MCF 10A (cell line): ENCODE measurements at regions of chr12 and their contacts with region 1.

Region 1: DNA sequence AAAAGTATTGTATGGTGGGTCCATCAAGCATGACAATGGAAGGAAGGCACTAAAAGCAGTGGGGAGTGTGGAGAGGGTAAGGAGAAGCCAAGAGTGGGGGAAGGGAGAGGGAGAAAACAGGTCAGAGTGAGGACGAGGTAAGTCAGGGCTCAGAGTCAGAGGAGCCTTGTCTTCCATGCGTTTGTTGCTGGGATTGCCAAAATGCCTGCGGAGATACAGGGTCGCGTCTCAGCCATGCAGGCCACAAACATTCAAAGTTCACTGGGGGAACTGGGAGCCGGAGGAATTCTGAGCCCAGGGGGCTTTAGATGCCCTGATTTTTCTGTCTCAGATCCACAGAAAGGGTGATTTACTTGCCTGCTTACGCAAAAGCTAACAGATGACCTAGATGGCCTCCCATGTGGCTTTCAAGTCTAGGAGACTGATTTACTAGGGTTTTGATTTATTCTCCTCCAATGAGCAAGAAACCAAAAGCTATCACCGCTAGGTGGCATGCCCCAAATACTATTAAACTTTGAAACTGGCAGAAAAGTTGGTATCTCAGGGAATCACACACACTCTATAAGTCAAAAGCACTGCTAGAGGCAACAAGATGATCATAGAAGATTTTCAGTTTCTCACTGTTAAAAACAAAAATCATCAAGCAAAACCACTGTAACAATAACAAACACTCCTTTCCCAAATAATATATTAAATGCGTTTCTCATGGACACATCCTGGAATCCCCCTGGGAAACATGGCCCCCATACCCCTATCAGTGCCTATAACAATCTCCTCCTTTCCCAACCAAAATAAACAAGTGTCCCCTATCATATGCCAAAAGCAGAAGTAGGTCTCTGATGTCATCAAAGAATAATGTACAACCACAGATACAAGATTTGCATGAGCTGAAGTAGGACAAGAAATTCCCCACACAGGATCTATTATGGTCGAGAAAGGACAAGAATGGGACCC is 26.6 kb upstream of the MDM1 start:
- DNase-seq: peak; percentile 76
- H3K4me3 Mint-ChIP-seq: no peak overlapping the region
- H3K27ac Mint-ChIP-seq: no peak overlapping the region
- H3K4me1 Mint-ChIP-seq: peaks cover 4% of the 10 kb centered on the region
- H3K27me3 Mint-ChIP-seq: no peaks in the 10 kb centered on the region
- CTCF ChIP-seq: peak; percentile 56

Region 2: DNA sequence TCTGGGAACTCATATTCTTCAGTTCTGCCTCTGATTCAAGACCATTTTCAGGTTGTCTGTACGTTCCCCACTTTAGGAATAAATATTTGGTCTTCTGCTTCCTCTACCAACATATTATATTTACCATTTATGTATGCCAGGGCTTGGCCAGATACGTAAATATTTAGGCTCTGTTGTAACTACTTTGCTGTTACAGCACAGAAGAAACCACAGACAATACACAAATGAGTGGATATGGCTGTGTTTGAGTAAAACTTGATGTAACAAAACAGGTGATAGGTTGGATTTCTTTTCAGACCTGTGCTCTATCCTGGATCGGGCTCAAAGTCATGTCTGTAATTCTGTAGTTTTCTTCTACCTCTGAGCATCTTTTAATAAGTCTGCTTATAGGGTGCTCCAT is 289.4 kb after region 1 on chr12:
- CTCF ChIA-PET with region 1: interaction called, 10 read pairs
- POLR2A ChIA-PET with region 1: no interaction called
- intact Hi-C with region 1: no loop called
- DNase-seq: no peak
- H3K4me3 Mint-ChIP-seq: no peak overlapping the region
- H3K27ac Mint-ChIP-seq: no peak overlapping the region
- H3K4me1 Mint-ChIP-seq: no peaks in the 10 kb centered on the region
- H3K27me3 Mint-ChIP-seq: no peaks in the 10 kb centered on the region
- CTCF ChIP-seq: no peak

Region 3: DNA sequence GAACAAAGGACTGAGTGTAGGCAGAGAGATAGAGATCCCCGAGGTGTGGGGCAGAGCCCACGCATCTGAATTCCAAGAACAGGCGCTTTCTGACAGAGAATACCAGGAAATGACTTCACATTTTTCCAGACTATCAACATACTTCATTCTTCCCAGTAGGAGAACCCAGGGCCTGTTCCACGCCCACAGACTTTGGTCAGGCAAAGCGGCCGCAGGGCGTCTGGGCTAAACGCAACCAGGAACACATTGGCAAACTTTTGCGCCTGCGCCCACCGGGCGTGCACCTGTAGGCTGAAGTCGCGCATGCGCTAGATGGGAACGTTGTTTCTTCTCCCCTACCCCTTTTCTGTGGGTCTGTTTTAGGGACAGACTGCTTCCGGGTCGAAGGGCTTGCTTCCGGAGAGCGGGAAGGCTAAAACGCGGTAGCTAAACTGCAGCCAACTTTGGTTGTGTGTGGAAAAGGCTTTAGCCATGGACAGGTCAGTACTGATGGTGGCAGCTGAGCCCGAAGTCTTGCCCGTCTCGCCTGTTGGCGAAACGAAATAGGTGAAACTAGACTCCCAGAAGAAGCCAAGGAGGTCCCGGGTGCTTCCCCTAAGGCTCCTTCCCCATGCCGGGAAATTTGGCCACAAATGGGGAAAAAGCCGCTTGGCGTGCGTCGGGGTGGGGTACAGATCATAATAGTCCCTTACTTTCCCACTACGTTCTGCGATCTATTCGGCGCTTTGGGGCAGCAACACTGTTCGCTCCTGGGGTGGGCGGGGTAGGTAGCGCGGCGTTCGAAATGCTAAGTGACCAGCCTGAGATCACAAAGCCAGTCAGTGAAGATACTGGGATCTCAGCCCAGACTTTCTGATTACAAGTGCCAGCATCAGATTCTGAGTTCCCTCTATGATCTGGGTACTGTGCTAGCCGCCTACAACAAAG is 328.0 kb after region 1 on chr12 and contains the start of gene NUP107:
- CTCF ChIA-PET with region 1: interaction called, 3 read pairs
- POLR2A ChIA-PET with region 1: interaction called, 8 read pairs
- intact Hi-C with region 1: loop called (anchors 1 kb)
- DNase-seq: peak; percentile 99
- H3K4me3 Mint-ChIP-seq: peak within 1 kb of the TSS; percentile 91
- H3K27ac Mint-ChIP-seq: peak within 1 kb of the TSS; percentile 97
- H3K4me1 Mint-ChIP-seq: peaks cover 14% of the 10 kb centered on the region
- H3K27me3 Mint-ChIP-seq: no peaks in the 10 kb centered on the region
- CTCF ChIP-seq: no peak
- total RNA-seq, gene NUP107: 48.1 and 54.5 TPM in 2 replicates